Activated naive CD4-positive, alpha-beta T cell treated with anti-CD3 and anti-CD28 coated beads, Interleukin-2, amount 10 ng/mL, durations not matched to agents 7 days and 5 days (primary cell): ENCODE measurements at regions of chr3 and their contacts with region 1.

Region 1: DNA sequence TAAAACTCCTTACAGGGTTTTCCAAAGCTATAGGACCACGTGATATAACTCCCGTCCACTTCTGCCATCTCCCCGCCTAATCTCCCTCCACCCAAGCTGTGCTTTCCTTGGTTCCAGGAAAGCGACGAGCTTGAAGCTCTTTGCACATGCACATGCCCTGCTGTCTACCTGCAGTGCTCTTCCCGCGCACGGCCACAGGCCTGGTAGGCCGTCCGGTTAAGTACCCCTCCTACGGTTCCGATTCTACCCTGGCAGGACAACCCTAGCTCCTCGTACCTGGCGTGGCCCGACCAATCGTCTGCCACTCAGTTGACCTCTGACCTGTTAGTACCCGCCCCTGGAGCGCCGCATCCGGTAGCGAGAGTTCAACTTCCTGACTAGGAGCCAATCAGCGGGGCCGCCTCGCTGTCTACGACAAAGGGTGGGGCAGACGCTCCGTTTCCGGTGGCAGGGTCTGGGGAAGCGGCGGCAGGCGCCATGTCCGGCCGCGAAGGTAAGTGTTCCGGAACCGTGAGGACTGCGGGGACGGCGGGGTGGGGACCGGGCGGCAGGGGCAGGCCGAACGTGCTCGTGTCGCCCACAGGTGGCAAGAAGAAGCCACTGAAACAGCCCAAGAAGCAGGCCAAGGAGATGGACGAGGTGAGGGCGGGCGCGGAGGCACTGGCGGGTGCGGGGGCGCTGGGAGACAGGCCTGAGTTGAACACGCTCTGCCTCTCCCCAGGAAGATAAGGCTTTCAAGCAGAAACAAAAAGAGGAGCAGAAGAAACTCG is at the starts of genes CCDC51 and TMA7:
- DNase-seq: peak; percentile 99
- H3K4me3 Mint-ChIP-seq: peak within 1 kb of the TSS; percentile 85
- H3K27ac Mint-ChIP-seq: peak within 1 kb of the TSS; percentile 91
- H3K4me1 Mint-ChIP-seq: peaks cover 52% of the 10 kb centered on the region
- H3K27me3 Mint-ChIP-seq: no peaks in the 10 kb centered on the region

Region 2: GRCh38 chr3:47791193-47791855 is 648.7 kb before region 1 on chr3:
- CTCF ChIA-PET with region 1: no interaction called
- DNase-seq: no peak
- H3K4me3 Mint-ChIP-seq: no peak overlapping the region
- H3K27ac Mint-ChIP-seq: peak overlapping the region; percentile 21
- H3K4me1 Mint-ChIP-seq: peaks cover 3% of the 10 kb centered on the region
- H3K27me3 Mint-ChIP-seq: peaks cover 9% of the 10 kb centered on the region

Region 3: GRCh38 chr3:48194446-48195071 is 245.4 kb before region 1 on chr3:
- CTCF ChIA-PET with region 1: interaction called, 54 read pairs
- DNase-seq: peak; percentile 49
- H3K4me3 Mint-ChIP-seq: no peak overlapping the region
- H3K27ac Mint-ChIP-seq: no peak overlapping the region
- H3K4me1 Mint-ChIP-seq: no peaks in the 10 kb centered on the region
- H3K27me3 Mint-ChIP-seq: peaks cover 44% of the 10 kb centered on the region

Region 4: GRCh38 chr3:48247401-48247811 is 192.6 kb before region 1 on chr3:
- CTCF ChIA-PET with region 1: interaction called, 15 read pairs
- DNase-seq: no peak
- H3K4me3 Mint-ChIP-seq: peak overlapping the region; percentile 37
- H3K27ac Mint-ChIP-seq: peak overlapping the region; percentile 85
- H3K4me1 Mint-ChIP-seq: peaks cover 46% of the 10 kb centered on the region
- H3K27me3 Mint-ChIP-seq: no peaks in the 10 kb centered on the region

Region 5: DNA sequence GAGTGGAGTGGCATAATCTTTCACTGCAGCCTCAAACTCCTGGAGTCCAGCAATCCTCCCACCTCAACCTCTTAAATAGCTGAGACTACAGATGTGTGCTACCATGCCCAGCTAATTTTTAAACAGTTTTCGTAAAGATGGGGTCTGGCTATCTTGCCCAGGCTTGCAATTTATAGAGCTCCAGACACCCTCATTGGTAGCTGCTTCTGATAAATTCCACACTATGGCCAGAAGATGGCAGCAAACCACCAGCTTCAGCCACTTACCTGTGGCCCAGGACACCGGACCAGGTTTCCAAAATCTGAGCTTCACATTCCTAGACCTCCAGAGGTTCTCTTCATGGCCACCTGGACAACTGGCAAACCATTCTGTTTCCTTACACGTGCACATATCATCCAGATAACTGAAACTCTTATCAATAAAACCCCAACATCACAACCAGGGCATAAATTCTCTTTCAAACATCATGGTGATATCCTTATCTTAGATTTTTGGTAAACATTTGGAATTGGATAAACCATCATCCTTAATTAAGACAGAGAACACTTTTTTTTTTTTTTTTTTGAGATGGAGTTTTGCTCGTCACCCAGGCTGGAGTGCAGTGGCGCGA is 39.1 kb before region 1 on chr3:
- CTCF ChIA-PET with region 1: interaction called, 170 read pairs
- DNase-seq: peak; percentile 79
- H3K4me3 Mint-ChIP-seq: no peak overlapping the region
- H3K27ac Mint-ChIP-seq: no peak overlapping the region
- H3K4me1 Mint-ChIP-seq: no peaks in the 10 kb centered on the region
- H3K27me3 Mint-ChIP-seq: peaks cover 25% of the 10 kb centered on the region

Region 6: DNA sequence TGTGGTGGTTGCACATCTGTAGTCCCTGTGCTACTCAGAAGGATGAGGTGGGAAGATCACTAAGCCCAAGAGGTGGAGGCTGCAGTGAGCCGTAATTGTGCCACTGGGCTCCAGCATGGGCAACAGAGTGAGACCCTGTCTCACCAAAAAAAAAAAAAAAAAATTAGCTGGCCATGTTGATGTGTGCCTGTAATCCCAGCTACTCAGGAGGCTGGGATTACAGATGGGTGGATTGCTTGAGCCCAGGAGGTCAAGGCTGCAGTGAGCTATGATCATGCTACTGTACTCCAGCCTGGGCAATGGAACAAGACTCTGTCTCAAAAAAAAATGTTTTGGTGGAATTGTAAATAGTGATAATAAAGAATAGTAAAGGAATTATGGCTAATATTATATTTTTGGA is 16.5 kb after region 1 on chr3:
- CTCF ChIA-PET with region 1: interaction called, 22 read pairs
- DNase-seq: peak; percentile 7
- H3K4me3 Mint-ChIP-seq: no peak overlapping the region
- H3K27ac Mint-ChIP-seq: no peak overlapping the region
- H3K4me1 Mint-ChIP-seq: peaks cover 10% of the 10 kb centered on the region
- H3K27me3 Mint-ChIP-seq: no peaks in the 10 kb centered on the region

Region 7: GRCh38 chr3:48532271-48532976 is 92.4 kb after region 1 on chr3:
- CTCF ChIA-PET with region 1: interaction called, 10 read pairs
- DNase-seq: no peak
- H3K4me3 Mint-ChIP-seq: no peak overlapping the region
- H3K27ac Mint-ChIP-seq: no peak overlapping the region
- H3K4me1 Mint-ChIP-seq: peaks cover 12% of the 10 kb centered on the region
- H3K27me3 Mint-ChIP-seq: no peaks in the 10 kb centered on the region